Caco-2 (cell line): ENCODE measurements at regions of chr3 and their contacts with region 1.

Region 1: DNA sequence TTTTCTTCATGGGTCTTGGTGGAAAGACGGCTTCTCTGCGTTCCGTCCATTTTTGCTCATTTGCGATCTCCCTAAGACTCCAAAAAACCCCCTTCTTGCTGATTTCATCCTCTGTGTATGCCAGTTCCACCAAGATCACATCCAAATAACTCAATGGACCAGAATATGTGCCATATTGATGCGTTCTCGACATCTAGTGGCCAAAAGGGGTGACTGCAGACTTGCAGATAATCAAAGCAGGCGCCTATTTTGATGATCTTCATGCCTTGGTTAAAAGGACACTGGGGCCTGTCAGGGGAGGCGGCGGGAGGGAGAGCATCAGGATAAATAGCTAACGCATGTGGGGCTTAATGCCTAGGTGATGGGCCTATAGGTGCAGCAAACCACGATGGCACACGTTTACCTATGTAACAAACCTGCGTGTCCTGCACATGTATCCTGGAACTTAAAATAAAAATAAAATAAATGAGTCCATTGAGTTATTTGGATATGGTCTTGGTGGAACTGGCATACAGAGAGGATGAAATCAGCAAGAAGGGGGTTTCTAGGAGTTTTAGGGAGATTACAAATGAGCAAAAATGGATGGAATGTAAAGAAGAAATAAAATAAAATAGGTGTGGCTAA is 104.2 kb upstream of the RAD18 start:
- DNase-seq: peak; percentile 53 to 58
- H3K4me3 ChIP-seq: no peak overlapping the region
- H3K4me3 Mint-ChIP-seq: no peak overlapping the region
- H3K27ac Mint-ChIP-seq: no peak overlapping the region
- H3K4me1 ChIP-seq: no peaks in the 10 kb centered on the region
- H3K4me1 Mint-ChIP-seq: no peaks in the 10 kb centered on the region
- H3K27me3 ChIP-seq: no peaks in the 10 kb centered on the region
- H3K27me3 Mint-ChIP-seq: peaks cover 5% of the 10 kb centered on the region
- CTCF ChIP-seq: peak; percentile 79 to 90

Region 2: DNA sequence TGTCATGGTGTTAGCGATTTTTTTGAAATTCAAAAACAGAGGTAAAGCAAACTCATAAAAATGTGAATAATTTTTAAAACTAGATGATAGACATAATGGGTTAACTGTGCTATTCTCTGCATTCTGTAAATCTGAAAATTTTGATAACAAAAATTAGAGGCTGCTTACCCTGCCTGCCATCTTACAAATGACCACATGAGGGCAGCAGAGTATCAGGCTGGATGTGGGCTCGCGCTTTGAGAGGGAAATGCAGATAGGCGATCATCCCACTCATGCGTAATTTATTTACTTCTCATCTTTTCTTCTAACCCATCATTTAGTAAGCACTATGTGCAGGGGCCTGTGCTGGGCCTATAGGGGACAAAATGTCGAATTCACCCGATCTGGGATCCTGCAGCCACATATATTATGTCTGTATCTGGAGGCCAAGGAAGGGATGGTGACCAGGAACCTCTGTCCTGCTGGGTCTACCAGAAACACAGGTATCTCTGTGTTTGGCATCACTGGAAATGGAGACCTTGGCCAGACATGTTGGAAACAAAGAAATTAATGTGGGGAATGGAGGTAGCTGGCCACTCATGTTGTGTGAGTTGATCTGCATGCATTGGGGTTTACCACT is 96.4 kb before region 1 on chr3:
- CTCF ChIA-PET with region 1: interaction called, 3 read pairs
- POLR2A ChIA-PET with region 1: no interaction called
- intact Hi-C with region 1: loop called (anchors 1 kb)
- DNase-seq: peak in 1 of 2 experiments; percentile 72
- H3K4me3 ChIP-seq: no peak overlapping the region
- H3K4me3 Mint-ChIP-seq: no peak overlapping the region
- H3K27ac Mint-ChIP-seq: no peak overlapping the region
- H3K4me1 ChIP-seq: no peaks in the 10 kb centered on the region
- H3K4me1 Mint-ChIP-seq: no peaks in the 10 kb centered on the region
- H3K27me3 ChIP-seq: no peaks in the 10 kb centered on the region
- H3K27me3 Mint-ChIP-seq: no peaks in the 10 kb centered on the region
- CTCF ChIP-seq: peak; percentile 92 to 94

Region 3: GRCh38 chr3:8996681-8997121 is 70.8 kb before region 1 on chr3:
- CTCF ChIA-PET with region 1: no interaction called
- POLR2A ChIA-PET with region 1: no interaction called
- intact Hi-C with region 1: loop called (anchors 1 kb)
- DNase-seq: peak; percentile 64 to 66
- H3K4me3 ChIP-seq: no peak overlapping the region
- H3K4me3 Mint-ChIP-seq: no peak overlapping the region
- H3K27ac Mint-ChIP-seq: no peak overlapping the region
- H3K4me1 ChIP-seq: no peaks in the 10 kb centered on the region
- H3K4me1 Mint-ChIP-seq: peaks cover 8% of the 10 kb centered on the region
- H3K27me3 ChIP-seq: no peaks in the 10 kb centered on the region
- H3K27me3 Mint-ChIP-seq: peaks cover 13% of the 10 kb centered on the region
- CTCF ChIP-seq: peak; percentile 42 to 63

Region 4: GRCh38 chr3:9033867-9034266 is 33.6 kb before region 1 on chr3:
- CTCF ChIA-PET with region 1: no interaction called
- POLR2A ChIA-PET with region 1: no interaction called
- intact Hi-C with region 1: loop called (anchors 1 kb)
- DNase-seq: peak in 1 of 2 experiments; percentile 16
- H3K4me3 ChIP-seq: no peak overlapping the region
- H3K4me3 Mint-ChIP-seq: no peak overlapping the region
- H3K27ac Mint-ChIP-seq: no peak overlapping the region
- H3K4me1 ChIP-seq: no peaks in the 10 kb centered on the region
- H3K4me1 Mint-ChIP-seq: no peaks in the 10 kb centered on the region
- H3K27me3 ChIP-seq: no peaks in the 10 kb centered on the region
- H3K27me3 Mint-ChIP-seq: peaks cover 9% of the 10 kb centered on the region
- CTCF ChIP-seq: peak in 1 of 2 experiments; percentile 27

Region 5: GRCh38 chr3:9302425-9303181 is 235.1 kb after region 1 on chr3:
- CTCF ChIA-PET with region 1: no interaction called
- POLR2A ChIA-PET with region 1: no interaction called
- intact Hi-C with region 1: loop called (anchors 1 kb)
- DNase-seq: peak; percentile 79 to 85
- H3K4me3 ChIP-seq: no peak overlapping the region
- H3K4me3 Mint-ChIP-seq: no peak overlapping the region
- H3K27ac Mint-ChIP-seq: no peak overlapping the region
- H3K4me1 ChIP-seq: no peaks in the 10 kb centered on the region
- H3K4me1 Mint-ChIP-seq: no peaks in the 10 kb centered on the region
- H3K27me3 ChIP-seq: no peaks in the 10 kb centered on the region
- H3K27me3 Mint-ChIP-seq: peaks cover 3% of the 10 kb centered on the region
- CTCF ChIP-seq: peak; percentile 75 to 85